Activated naive CD4-positive, alpha-beta T cell treated with anti-CD3 and anti-CD28 coated beads for 36 hours (primary cell): ENCODE measurements at regions of chr19 and their contacts with region 1.

Region 1: GRCh38 chr19:572140-572742 is at the start of gene BSG:
- DNase-seq: peak; percentile 99
- H3K4me3 Mint-ChIP-seq: peak within 1 kb of the TSS; percentile 90
- H3K27ac Mint-ChIP-seq: peak within 1 kb of the TSS; percentile 98
- H3K4me1 Mint-ChIP-seq: peaks cover 36% of the 10 kb centered on the region
- H3K27me3 Mint-ChIP-seq: no peaks in the 10 kb centered on the region
- total RNA-seq, gene BSG: 160 to 161 TPM

Region 2: GRCh38 chr19:531009-531752 is 41.1 kb before region 1 on chr19:
- CTCF ChIA-PET with region 1: no interaction called
- intact Hi-C with region 1: loop called (anchors 1 kb)
- DNase-seq: peak; percentile 82
- H3K4me3 Mint-ChIP-seq: peak overlapping the region; percentile 77
- H3K27ac Mint-ChIP-seq: peak overlapping the region; percentile 77
- H3K4me1 Mint-ChIP-seq: peaks cover 26% of the 10 kb centered on the region
- H3K27me3 Mint-ChIP-seq: peaks cover 3% of the 10 kb centered on the region

Region 3: DNA sequence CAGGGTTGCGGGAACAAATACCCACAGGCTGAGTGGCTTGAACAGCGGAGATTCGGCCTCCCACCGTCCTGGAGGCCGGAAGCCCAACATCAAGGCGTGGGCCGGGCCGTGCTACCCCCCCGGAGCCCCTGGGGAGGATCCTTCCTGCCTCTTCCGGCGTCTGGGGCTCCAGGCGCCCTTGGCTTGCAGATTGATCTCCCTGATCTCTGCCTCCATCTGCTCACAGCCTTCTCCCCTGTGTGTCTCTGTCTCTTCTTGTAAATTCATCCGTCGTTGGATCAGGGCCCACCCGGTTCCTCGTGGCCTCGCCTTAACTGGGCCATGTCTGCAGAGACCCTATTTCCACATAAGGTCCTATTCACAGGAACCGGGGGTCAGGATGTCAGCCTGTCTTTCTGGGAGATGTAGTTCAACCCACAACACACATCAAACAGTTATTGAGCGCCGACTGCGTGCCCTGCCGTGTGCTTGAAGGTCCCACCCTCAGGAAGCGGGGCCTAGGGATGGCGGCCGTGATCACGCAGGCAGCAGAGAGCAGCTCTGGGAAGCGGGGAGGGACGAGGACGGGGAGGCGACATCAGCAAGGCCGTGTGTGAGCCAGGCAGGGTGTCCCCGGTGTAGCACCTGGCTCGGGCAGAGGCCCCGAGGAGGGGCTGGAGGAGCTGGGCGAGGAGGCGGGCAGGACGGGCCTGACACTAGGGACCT is 38.7 kb after region 1 on chr19:
- CTCF ChIA-PET with region 1: no interaction called
- intact Hi-C with region 1: loop called (anchors 1 kb)
- DNase-seq: peak; percentile 73
- H3K4me3 Mint-ChIP-seq: peak overlapping the region; percentile 82
- H3K27ac Mint-ChIP-seq: peak overlapping the region; percentile 94
- H3K4me1 Mint-ChIP-seq: peaks cover 28% of the 10 kb centered on the region
- H3K27me3 Mint-ChIP-seq: no peaks in the 10 kb centered on the region

Region 4: GRCh38 chr19:633068-633785 is 61.0 kb after region 1 on chr19 and contains the start of gene POLRMT:
- CTCF ChIA-PET with region 1: no interaction called
- intact Hi-C with region 1: loop called (anchors 1 kb)
- DNase-seq: peak; percentile 98
- H3K4me3 Mint-ChIP-seq: peak within 1 kb of the TSS; percentile 93
- H3K27ac Mint-ChIP-seq: peak within 1 kb of the TSS; percentile 78
- H3K4me1 Mint-ChIP-seq: peaks cover 37% of the 10 kb centered on the region
- H3K27me3 Mint-ChIP-seq: no peaks in the 10 kb centered on the region
- total RNA-seq, gene POLRMT: 63.8 to 65.6 TPM

Region 5: GRCh38 chr19:680287-681028 is 108.2 kb after region 1 on chr19:
- CTCF ChIA-PET with region 1: no interaction called
- intact Hi-C with region 1: loop called (anchors 1 kb)
- DNase-seq: peak; percentile 100
- H3K4me3 Mint-ChIP-seq: peak overlapping the region; percentile 94
- H3K27ac Mint-ChIP-seq: peak overlapping the region; percentile 99
- H3K4me1 Mint-ChIP-seq: peaks cover 11% of the 10 kb centered on the region
- H3K27me3 Mint-ChIP-seq: peaks cover 5% of the 10 kb centered on the region

Region 6: DNA sequence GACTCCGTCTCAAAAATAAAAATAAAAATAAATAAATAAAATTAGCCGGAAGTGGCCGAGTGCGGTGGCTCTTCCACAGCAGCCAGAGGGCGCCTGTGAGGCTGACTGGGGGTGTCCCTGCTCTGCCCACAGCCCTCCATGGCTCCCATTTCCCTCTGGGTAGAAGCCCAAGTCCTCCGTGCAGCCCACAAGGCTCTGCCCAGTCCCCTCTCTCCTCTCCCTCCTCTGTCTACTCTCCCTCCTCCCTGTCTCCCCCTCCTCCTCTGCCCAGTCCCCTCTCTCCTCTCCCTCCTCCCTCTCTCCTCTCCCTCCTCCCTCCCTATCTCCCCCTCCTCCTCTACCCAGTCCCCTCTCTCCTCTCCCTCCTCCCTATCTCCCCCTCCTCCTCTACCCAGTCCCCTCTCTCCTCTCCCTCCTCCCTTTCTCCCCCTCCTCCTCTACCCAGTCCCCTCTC is 199.1 kb after region 1 on chr19:
- CTCF ChIA-PET with region 1: no interaction called
- intact Hi-C with region 1: no loop called
- DNase-seq: peak; percentile 65
- H3K4me3 Mint-ChIP-seq: no peak overlapping the region
- H3K27ac Mint-ChIP-seq: no peak overlapping the region
- H3K4me1 Mint-ChIP-seq: peaks cover 3% of the 10 kb centered on the region
- H3K27me3 Mint-ChIP-seq: no peaks in the 10 kb centered on the region

Region 7: GRCh38 chr19:913080-913748 is 341.0 kb after region 1 on chr19 and contains the start of gene R3HDM4:
- CTCF ChIA-PET with region 1: no interaction called
- intact Hi-C with region 1: loop called (anchors 5 kb)
- DNase-seq: peak; percentile 88
- H3K4me3 Mint-ChIP-seq: peak within 1 kb of the TSS; percentile 84
- H3K27ac Mint-ChIP-seq: peak within 1 kb of the TSS; percentile 95
- H3K4me1 Mint-ChIP-seq: peaks cover 34% of the 10 kb centered on the region
- H3K27me3 Mint-ChIP-seq: peaks cover 2% of the 10 kb centered on the region
- total RNA-seq, gene R3HDM4: 111 to 120 TPM

Region 8: DNA sequence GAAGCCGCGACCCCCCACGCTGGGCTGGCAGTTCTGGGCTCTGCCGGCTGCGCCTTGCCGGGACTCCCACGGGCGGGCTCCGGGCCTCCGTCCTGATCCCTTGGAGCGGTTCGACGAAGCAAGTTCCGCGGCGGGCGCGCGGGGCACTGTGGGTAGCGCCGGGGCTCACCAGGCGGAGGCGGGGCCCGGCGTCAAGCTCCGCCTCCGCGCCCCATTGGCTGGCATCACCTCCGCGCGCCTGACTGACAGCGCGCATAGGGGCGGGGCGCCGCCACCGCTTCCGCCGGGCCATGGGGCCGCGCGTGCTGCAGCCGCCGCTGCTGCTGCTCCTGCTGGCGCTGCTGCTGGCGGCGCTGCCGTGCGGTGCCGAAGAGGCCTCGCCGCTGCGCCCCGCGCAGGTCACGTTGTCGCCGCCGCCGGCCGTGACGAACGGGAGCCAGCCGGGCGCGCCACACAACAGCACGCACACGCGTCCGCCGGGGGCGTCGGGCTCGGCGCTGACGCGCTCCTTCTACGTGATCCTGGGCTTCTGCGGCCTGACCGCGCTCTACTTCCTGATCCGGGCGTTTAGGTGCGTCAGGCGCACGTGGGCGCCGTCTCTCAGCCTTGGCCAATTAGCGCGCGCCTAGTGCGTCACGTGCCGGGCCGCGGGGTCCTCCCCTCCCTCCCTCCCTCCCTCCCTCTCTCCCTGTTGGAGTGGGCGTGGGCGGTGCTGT is 703.2 kb after region 1 on chr19 and contains the start of gene FAM174C:
- CTCF ChIA-PET with region 1: no interaction called
- intact Hi-C with region 1: no loop called
- DNase-seq: peak; percentile 96
- H3K4me3 Mint-ChIP-seq: peak within 1 kb of the TSS; percentile 87
- H3K27ac Mint-ChIP-seq: peak within 1 kb of the TSS; percentile 94
- H3K4me1 Mint-ChIP-seq: peaks cover 55% of the 10 kb centered on the region
- H3K27me3 Mint-ChIP-seq: no peaks in the 10 kb centered on the region
- total RNA-seq, gene FAM174C: 62.8 to 65.3 TPM